ENCODE measurements at regions of chr4 and their contacts with region 1.

Region 1: GRCh38 chr4:17562160-17562559 is 14.8 kb upstream of the LAP3 start:
- DNase-seq: no peak
- H3K4me3 ChIP-seq: no peak overlapping the region
- H3K27ac ChIP-seq: no peak overlapping the region
- H3K4me1 ChIP-seq: no peaks in the 10 kb centered on the region
- H3K27me3 ChIP-seq: no peaks in the 10 kb centered on the region
- CTCF ChIP-seq: no peak
- POLR2A ChIP-seq: no peak

Region 2: DNA sequence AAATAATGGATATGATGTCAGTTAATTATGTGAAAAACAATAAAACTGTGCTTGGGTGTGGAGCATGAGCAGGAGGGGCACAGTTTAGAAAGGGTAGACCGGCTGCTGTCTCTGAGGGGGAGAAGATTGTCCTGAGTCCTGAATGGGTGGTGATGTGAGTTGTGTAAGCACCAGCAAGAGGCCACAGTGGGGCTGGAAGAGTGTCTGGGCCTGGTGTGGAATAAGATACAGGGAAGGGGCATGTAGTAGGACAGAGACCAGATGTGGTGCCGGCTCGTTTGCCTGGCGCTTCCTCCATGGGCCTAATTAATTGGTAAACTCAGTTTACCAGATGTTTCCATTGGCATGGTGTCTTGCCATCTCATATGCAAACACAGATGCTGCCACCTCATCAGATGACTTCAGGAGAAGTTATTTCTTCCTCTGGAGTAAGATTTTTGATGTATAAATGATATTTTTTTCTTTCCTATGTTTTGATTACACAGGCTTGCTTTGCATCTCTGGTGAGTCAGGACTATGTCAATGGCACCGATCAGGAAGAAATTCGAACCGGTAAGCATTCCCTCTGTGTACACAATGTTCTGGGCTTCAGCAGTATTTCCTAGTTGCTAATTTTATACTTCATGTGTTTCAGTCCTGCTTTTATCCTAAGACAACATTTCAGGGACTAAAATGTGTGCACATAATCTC is 57.4 kb after region 1 on chr4:
- intact Hi-C with region 1: loop called (anchors 10 kb)
- DNase-seq: no peak
- H3K4me3 ChIP-seq: no peak overlapping the region
- H3K27ac ChIP-seq: no peak overlapping the region
- H3K4me1 ChIP-seq: peaks cover 45% of the 10 kb centered on the region
- H3K27me3 ChIP-seq: no peaks in the 10 kb centered on the region
- CTCF ChIP-seq: no peak
- POLR2A ChIP-seq: no peak

Measured in vagina (tissue), 2 donors.